ENCODE measurements at regions of chr13 and their contacts with region 1.

Region 1: GRCh38 chr13:97212601-97213040 is 9.5 kb upstream of the MBNL2 start:
- DNase-seq: peak in 2 of 4 experiments; percentile 40 to 47
- ATAC-seq: peak; percentile 95
- H3K4me3 ChIP-seq: no peak overlapping the region
- H3K27ac ChIP-seq: no peak overlapping the region
- H3K4me1 ChIP-seq: no peaks in the 10 kb centered on the region; a peak in 1 of 5 replicates
- H3K27me3 ChIP-seq: no peaks in the 10 kb centered on the region
- CTCF ChIP-seq: peak; percentile 56 to 74 (median 61)
- EP300 ChIP-seq: no peak
- POLR2A ChIP-seq: no peak
- RAD21 ChIP-seq: peak; percentile 73 to 82

Region 2: DNA sequence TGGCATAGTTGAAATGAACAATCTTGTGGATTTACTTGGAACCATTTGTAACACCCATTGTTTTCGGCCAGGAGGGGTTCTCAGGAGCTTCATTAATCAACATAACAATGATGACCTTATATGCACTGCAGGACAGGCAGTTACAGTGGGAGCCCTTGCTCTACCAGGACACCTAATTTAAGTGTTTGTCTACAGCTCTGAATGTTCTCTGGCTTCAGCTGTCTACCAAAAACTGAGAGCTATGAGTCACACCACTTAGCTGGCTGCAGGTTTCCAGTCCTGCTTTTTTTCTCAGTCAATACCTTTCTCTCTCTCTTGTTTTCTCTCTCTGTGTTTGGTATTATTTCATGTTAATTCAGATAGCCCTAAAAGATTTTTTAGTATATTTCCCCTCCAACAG is 95.9 kb before region 1 on chr13:
- CTCF ChIA-PET with region 1: no interaction called
- POLR2A ChIA-PET with region 1: no interaction called
- in situ Hi-C with region 1: loop called (anchors 5 kb)
- intact Hi-C with region 1: no loop called
- DNase-seq: no peak
- ATAC-seq: no peak
- H3K4me3 ChIP-seq: no peak overlapping the region
- H3K27ac ChIP-seq: no peak overlapping the region
- H3K4me1 ChIP-seq: no peaks in the 10 kb centered on the region; a peak in 1 of 5 replicates
- H3K27me3 ChIP-seq: 0 out of 5 replicates have a peak, but pooled peaks cover 0 to 6% of the 10 kb centered on the region in 2 experiments
- CTCF ChIP-seq: no peak
- EP300 ChIP-seq: no peak
- POLR2A ChIP-seq: no peak
- RAD21 ChIP-seq: no peak

Measured in K562 (cell line).